Activated CD4-positive, alpha-beta memory T cell treated with anti-CD3 and anti-CD28 coated beads, Interleukin-2, amount 10 ng/mL, durations not matched to agents 7 days and 5 days (primary cell): ENCODE measurements at regions of chr6 and their contacts with region 1.

Region 1: DNA sequence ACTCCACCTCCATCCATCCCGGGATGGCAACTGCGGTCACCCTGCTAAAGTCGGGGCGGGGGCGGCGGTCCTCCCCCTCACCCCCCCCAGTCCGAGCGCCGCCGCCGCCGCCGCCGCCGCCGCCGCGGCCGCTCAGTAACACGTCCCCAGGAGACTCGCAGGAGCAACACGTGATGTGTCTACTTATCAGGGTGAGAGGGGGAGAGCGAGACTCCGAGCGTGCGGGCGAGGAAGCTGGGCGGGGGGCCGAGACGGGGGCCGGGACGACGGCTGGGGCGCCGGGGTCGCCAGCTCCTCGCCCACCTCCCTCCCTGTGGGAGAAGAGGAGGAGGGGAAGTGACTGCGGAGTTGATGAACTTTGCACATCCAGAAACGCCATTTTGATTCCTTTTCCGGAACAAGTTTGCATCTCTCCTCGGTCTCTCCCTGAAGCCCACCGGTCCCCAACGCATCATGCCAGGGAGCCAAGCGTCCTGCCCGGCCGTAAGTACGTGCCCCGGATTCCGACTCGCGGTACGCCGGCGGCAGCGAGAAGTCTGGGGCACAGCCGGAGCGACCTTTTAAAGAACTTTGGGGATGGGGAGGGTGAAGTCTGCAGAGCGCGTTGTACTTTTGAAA is at the start of gene RREB1:
- DNase-seq: peak; percentile 65
- H3K4me3 Mint-ChIP-seq: peak within 1 kb of the TSS; percentile 92
- H3K27ac Mint-ChIP-seq: peak within 1 kb of the TSS; percentile 89
- H3K4me1 Mint-ChIP-seq: peaks cover 38% of the 10 kb centered on the region
- H3K27me3 Mint-ChIP-seq: no peaks in the 10 kb centered on the region
- total RNA-seq, gene RREB1: 26.5 to 27.9 TPM

Region 2: DNA sequence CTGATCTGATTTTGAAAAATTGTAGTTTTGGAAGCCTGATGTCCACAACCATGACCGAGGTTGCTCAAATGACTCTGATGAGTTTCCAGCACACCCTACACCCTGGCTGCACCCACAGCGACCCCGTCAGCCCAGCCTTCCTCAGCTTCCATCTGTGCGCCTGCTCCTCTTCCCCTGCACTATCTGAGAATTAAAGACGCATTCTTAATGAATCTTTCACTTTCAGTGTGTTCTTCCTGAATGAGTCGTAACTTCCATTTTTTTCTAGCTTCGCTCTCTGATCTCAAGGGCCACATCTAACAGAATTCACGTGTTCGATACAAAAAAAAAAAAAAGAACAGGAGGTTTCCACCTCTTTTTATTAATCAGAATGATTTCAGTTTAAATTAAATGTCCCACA is 21.2 kb before region 1 on chr6:
- CTCF ChIA-PET with region 1: interaction called, 13 read pairs
- POLR2A ChIA-PET with region 1: interaction called, 39 read pairs
- DNase-seq: peak; percentile 19
- H3K4me3 Mint-ChIP-seq: peak overlapping the region; percentile 61
- H3K27ac Mint-ChIP-seq: no peak overlapping the region
- H3K4me1 Mint-ChIP-seq: peaks cover 27% of the 10 kb centered on the region
- H3K27me3 Mint-ChIP-seq: peaks cover 33% of the 10 kb centered on the region

Region 3: DNA sequence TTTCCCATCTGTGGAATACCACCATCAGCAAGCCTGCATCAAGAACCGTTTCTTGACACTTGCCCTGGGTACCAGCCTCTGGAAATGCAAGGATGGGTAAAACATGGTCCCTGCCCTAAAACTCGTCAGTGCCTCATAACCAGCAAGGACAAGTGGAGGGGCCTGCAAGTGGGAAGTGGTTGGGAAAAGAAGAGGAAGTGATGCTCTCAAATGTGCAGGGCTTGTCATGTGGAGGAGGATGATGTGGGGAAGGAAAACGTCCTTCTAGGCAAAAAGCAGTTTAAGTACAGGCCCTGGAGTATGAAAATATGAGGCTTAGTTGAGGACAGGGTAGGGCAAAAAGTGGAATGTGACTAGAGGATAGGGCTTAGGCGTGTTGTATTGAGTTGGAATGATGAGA is 19.1 kb after region 1 on chr6:
- CTCF ChIA-PET with region 1: no interaction called
- POLR2A ChIA-PET with region 1: interaction called, 11 read pairs
- DNase-seq: no peak
- H3K4me3 Mint-ChIP-seq: no peak overlapping the region
- H3K27ac Mint-ChIP-seq: no peak overlapping the region
- H3K4me1 Mint-ChIP-seq: peaks cover 58% of the 10 kb centered on the region
- H3K27me3 Mint-ChIP-seq: no peaks in the 10 kb centered on the region

Region 4: DNA sequence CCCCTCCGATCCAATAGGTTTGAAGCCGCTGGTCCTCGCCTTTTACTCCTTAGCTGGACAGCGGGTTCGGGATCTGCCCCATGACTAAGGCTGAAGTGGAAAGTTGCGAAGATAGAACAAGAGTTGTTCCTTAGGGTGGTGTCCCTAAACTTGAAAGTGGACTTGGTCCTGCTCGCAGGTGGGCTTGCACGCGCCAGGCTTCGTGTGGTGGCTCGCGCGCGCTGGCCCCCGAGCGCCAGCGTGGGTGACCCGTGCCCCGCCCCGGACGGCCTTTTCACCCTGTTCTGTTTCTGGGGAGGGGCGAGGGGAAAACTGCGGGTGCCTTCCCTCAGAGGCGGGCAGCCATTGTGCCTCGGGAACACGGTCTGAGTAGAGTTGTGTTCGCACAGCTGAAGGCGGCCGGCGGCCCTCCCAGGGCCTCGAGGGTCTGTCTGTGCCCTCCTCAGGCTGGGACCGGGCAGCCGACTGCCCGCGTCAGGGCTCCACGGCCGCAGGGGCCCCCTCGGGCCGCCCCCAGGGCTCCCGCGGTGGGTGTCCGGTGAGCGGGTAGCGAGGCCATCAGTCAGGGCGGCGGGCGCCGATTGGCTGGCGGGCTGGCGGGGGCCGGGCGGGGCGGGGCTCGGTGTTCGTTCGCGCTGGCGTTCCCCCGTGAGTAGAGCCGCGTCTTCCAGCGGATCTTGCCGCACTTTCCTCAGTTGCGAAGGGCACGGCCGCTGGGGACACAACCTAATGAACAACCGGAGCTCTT is 33.1 kb after region 1 on chr6:
- CTCF ChIA-PET with region 1: no interaction called
- POLR2A ChIA-PET with region 1: interaction called, 76 read pairs
- DNase-seq: peak; percentile 78
- H3K4me3 Mint-ChIP-seq: peak overlapping the region; percentile 75
- H3K27ac Mint-ChIP-seq: peak overlapping the region; percentile 35
- H3K4me1 Mint-ChIP-seq: peaks cover 65% of the 10 kb centered on the region
- H3K27me3 Mint-ChIP-seq: no peaks in the 10 kb centered on the region

Region 5: DNA sequence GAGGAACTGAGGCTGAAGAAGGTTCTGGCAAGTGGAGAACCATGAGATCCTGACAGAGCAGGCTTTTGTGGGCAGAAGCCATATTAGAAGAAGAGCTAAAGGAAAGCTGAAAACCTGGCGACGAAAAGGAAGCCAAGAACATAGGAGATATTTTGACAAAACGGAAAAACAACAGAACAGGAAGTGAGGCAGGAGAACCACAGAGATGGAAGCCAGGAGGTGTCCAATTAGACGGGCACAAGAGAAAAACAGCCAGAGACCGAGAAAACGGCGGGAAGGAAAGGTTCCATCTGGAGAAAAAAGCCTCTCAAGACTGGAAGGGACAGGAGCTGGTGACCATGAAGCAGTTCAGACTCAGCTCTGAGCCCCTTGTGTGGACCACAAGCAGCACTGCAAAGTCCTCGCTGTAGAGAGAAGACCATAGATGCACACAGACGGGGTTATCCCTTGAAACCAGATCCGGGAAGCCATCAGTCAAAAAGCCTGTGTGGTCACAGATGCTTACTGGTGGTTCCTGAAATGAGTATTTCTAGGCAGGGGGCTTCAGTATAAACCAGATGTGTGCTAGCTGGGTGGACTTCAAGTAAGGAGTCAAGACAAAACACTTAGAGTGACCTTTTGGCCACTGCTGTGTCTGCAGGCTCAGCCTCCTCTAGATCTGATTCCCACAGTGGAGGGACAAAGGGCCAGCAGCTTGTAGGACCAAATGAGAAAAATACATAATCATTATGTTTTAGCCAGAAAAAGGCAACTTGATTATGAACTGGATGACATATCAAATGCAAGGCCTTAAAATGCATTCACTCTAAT is 174.6 kb after region 1 on chr6:
- CTCF ChIA-PET with region 1: no interaction called
- POLR2A ChIA-PET with region 1: no interaction called
- DNase-seq: no peak
- H3K4me3 Mint-ChIP-seq: no peak overlapping the region
- H3K27ac Mint-ChIP-seq: peak overlapping the region; percentile 10
- H3K4me1 Mint-ChIP-seq: peaks cover 15% of the 10 kb centered on the region
- H3K27me3 Mint-ChIP-seq: no peaks in the 10 kb centered on the region